CD8-positive, alpha-beta memory T cell (primary cell): ENCODE measurements at regions of chr10 and their contacts with region 1.

Region 1: DNA sequence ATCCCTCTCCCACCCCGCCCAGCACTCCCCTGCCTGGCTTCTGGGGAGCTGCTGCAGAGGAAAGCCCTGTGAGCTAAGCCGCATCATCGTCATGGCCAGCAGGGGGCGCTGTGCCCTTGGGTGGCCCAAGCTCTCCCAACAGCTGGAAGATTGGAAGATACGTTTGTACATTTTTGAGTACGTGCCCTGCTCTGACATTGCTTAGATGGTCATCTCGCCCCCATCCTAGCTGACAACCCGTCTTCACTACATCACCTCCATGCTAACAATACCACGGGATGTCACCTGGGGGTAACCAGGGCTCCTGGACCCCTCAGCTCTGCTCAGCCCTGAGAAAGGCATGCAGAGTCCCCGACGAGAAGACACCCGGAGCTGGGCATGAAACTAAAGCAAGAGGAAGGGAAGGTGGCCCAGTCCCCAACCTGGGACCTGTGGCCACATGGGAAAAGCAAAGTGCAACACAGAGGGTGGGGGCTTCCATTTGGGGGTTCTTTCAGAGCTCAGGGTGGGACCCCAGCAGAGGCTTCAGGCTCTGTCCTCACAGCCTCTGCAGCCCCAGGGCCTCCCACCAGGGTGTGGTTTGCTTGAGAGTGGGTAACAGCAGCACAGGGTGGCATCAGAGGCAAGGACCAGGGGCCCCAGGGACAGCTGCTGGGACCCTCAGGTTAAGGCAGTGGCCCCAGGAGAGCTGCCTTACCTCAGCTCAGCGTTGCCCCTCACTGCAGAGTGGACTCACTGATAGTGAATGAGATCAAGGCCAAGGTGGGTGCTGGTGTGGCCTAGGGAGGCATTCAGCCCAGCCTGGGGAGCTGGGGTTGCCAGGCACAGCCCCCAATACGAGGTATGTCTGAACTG is 136.7 kb downstream of the PTPN20 start:
- DNase-seq: peak; percentile 45 to 81 (median 58)
- H3K4me3 ChIP-seq: no peak overlapping the region
- H3K4me3 Mint-ChIP-seq: peak overlapping the region in 2 of 7 donors; percentile 22 to 31
- H3K27ac ChIP-seq: no peak overlapping the region
- H3K27ac Mint-ChIP-seq: peak overlapping the region in 2 of 8 donors; percentile 5 to 49
- H3K4me1 ChIP-seq: peaks cover 10% of the 10 kb centered on the region
- H3K4me1 Mint-ChIP-seq: peaks cover 12 to 19% (median 18%) of the 10 kb centered on the region in 3 donors
- H3K27me3 ChIP-seq: no peaks in the 10 kb centered on the region
- H3K27me3 Mint-ChIP-seq: peaks cover 0 to 3% of the 10 kb centered on the region in 2 donors

Region 2: GRCh38 chr10:47024399-47025252 is 23.3 kb before region 1 on chr10:
- CTCF ChIA-PET with region 1: interaction called, 30 read pairs
- POLR2A ChIA-PET with region 1: no interaction called
- DNase-seq: peak; percentile 25 to 76 (median 42)
- H3K4me3 ChIP-seq: no peak overlapping the region
- H3K4me3 Mint-ChIP-seq: no peak overlapping the region
- H3K27ac ChIP-seq: no peak overlapping the region
- H3K27ac Mint-ChIP-seq: peak overlapping the region in 1 of 8 donors; percentile 56
- H3K4me1 ChIP-seq: no peaks in the 10 kb centered on the region
- H3K4me1 Mint-ChIP-seq: peaks cover 0 to 5% (median 0%) of the 10 kb centered on the region in 3 donors
- H3K27me3 ChIP-seq: no peaks in the 10 kb centered on the region
- H3K27me3 Mint-ChIP-seq: peaks cover 6 to 7% of the 10 kb centered on the region in 2 donors

Region 3: DNA sequence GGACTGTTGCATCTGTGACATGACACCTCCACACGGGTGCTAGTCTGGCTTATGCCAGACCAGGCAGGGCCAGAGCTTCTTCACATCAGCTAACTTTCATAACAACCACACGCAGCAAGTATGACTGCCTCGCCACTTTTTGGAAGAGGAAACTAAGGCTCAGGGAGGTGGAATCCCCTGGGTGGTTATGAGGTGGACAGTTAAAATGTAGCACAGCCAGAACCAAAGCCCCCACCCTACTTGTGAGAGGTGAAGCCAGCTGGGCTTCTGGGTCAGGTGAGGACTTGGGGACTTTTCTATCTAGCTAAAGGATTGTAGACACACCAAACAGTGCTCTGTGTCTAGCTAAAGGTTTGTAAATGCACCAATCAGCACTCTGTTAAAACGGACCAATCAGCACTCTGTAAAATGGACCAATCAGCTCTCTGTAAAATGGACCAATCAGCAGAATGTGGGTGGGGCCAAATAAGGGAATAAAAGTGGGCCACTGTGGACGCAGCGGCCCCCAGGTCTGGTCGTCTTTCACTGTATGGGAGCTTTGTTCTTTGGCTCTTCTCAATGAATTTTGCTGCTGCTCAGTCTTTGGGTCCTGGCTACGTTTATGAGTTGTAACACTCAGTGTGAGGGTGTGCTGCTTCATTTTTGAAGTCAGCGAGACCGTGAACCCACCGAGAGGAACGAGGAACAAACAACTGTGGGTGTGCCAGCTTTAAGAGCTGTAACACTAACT is 34.3 kb after region 1 on chr10:
- CTCF ChIA-PET with region 1: no interaction called
- POLR2A ChIA-PET with region 1: no interaction called
- DNase-seq: no peak
- H3K4me3 ChIP-seq: no peak overlapping the region
- H3K4me3 Mint-ChIP-seq: no peak overlapping the region
- H3K27ac ChIP-seq: no peak overlapping the region
- H3K27ac Mint-ChIP-seq: no peak overlapping the region
- H3K4me1 ChIP-seq: peaks cover under 1% of the 10 kb centered on the region
- H3K4me1 Mint-ChIP-seq: peaks cover 7 to 36% (median 8%) of the 10 kb centered on the region in 3 donors
- H3K27me3 ChIP-seq: no peaks in the 10 kb centered on the region
- H3K27me3 Mint-ChIP-seq: peaks cover 0 to 7% of the 10 kb centered on the region in 2 donors

Region 4: GRCh38 chr10:47092822-47093221 is 44.9 kb after region 1 on chr10:
- CTCF ChIA-PET with region 1: no interaction called
- POLR2A ChIA-PET with region 1: no interaction called
- DNase-seq: no peak
- H3K4me3 ChIP-seq: no peak overlapping the region
- H3K4me3 Mint-ChIP-seq: no peak overlapping the region
- H3K27ac ChIP-seq: no peak overlapping the region
- H3K27ac Mint-ChIP-seq: no peak overlapping the region
- H3K4me1 ChIP-seq: peaks cover 7% of the 10 kb centered on the region
- H3K4me1 Mint-ChIP-seq: peaks cover 0 to 5% (median 0%) of the 10 kb centered on the region in 3 donors
- H3K27me3 ChIP-seq: no peaks in the 10 kb centered on the region
- H3K27me3 Mint-ChIP-seq: peaks cover 3 to 4% of the 10 kb centered on the region in 2 donors

Region 5: DNA sequence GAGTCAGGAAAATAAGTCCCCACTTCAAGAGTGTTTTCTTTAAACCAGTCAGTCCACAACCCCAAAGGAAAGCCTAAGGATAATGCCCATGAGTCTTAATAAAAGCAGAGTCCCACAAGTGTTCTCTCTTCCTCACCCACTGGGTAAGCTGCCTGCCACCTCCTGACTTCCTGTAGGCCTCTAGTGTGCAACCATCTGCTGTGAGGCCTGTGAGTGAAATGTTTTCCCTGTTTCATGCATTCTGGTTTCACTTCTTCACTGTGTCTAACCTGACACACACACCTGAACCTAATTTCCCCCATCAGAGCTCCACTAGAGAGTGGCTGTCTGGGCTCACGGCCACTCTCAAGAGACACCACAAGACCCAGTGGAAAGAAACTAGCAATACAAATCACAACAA is 213.2 kb after region 1 on chr10:
- CTCF ChIA-PET with region 1: interaction called, 13 read pairs
- POLR2A ChIA-PET with region 1: no interaction called
- DNase-seq: peak in 3 of 5 donors; percentile 24 to 56 (median 54)
- H3K4me3 ChIP-seq: no peak overlapping the region
- H3K4me3 Mint-ChIP-seq: peak overlapping the region; percentile 2 to 70 (median 61)
- H3K27ac ChIP-seq: no peak overlapping the region
- H3K27ac Mint-ChIP-seq: peak overlapping the region; percentile 71 to 96 (median 91)
- H3K4me1 ChIP-seq: peaks cover 73% of the 10 kb centered on the region
- H3K4me1 Mint-ChIP-seq: peaks cover 65 to 93% (median 80%) of the 10 kb centered on the region in 3 donors
- H3K27me3 ChIP-seq: no peaks in the 10 kb centered on the region
- H3K27me3 Mint-ChIP-seq: peaks cover 0 to 2% of the 10 kb centered on the region in 2 donors

Region 6: DNA sequence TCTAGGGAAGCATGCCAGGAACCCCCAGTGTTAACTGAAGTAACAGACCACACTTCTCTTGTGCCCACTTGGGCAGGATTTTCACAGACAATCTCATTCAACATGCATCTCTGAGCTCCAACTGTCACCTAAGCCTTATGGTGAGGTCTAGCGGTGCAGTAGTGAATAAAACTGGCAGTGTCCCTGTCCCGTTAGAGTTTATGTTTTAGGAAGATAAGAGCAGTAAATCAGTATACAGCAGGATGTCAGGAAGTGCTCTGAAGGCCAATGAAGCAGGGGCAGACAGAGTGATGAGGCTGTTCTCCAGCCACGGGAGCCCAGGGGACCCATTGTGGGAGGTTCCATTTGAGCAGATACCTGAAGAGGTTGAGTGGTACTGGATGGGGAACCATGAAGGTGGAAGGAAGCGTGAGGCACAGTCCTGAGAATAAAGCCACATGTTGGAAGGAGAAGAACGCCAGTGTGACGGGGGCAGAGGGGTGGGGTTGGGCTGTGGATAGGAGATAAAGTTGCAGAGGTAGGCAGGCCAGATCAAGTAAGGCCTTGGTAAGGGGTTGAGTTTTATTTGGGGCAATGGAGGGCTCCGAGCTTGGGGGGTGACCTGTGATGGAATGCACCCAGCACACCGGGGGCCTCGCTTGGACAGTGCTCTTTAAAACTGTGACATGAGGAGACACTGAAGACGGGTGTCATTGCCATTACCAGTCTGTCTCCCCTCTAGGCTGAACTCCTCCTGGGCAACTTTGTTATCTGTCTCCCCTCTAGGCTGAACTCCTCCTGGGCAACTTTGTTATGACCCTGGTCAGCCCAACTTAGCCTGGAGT is 258.7 kb after region 1 on chr10:
- CTCF ChIA-PET with region 1: interaction called, 236 read pairs
- POLR2A ChIA-PET with region 1: interaction called, 5 read pairs
- DNase-seq: no peak
- H3K4me3 ChIP-seq: no peak overlapping the region
- H3K4me3 Mint-ChIP-seq: peak overlapping the region in 1 of 7 donors; percentile 19
- H3K27ac ChIP-seq: no peak overlapping the region
- H3K27ac Mint-ChIP-seq: peak overlapping the region in 2 of 8 donors; percentile 3 to 93
- H3K4me1 ChIP-seq: peaks cover 25% of the 10 kb centered on the region
- H3K4me1 Mint-ChIP-seq: peaks cover 11 to 22% (median 14%) of the 10 kb centered on the region in 3 donors
- H3K27me3 ChIP-seq: no peaks in the 10 kb centered on the region
- H3K27me3 Mint-ChIP-seq: peaks cover 0 to 2% of the 10 kb centered on the region in 2 donors

Region 7: DNA sequence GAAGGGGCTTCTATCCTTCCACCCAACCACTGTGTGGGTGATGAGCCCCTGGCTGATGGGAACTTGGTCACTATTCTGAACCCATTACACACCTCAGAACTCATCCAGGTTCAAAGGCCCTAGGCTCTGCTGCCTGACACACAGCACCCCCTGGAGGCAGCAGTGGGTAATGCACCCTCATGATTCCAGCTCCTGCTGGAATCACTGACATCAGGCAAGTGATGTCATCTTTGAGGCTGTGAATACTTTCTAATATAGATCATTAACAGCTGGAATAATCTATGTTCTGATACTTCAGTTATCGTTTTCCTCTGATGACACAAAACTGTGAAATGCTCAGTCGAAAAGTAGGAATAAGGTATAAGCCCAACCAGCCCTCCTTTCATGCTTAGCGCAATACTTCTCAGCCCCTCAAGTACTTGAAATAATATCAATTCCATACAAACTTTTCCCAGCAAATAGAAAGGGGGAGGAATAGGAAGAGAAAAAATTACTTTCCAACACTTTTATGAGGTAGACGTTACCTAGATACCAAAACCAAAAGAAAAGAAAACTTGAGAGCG is 292.8 kb after region 1 on chr10:
- CTCF ChIA-PET with region 1: interaction called, 17 read pairs
- POLR2A ChIA-PET with region 1: no interaction called
- DNase-seq: peak; percentile 34 to 73 (median 44)
- H3K4me3 ChIP-seq: no peak overlapping the region
- H3K4me3 Mint-ChIP-seq: no peak overlapping the region
- H3K27ac ChIP-seq: no peak overlapping the region
- H3K27ac Mint-ChIP-seq: no peak overlapping the region
- H3K4me1 ChIP-seq: no peaks in the 10 kb centered on the region
- H3K4me1 Mint-ChIP-seq: no peaks in the 10 kb centered on the region
- H3K27me3 ChIP-seq: no peaks in the 10 kb centered on the region
- H3K27me3 Mint-ChIP-seq: peaks cover 5 to 18% of the 10 kb centered on the region in 2 donors